IMR-90 (cell line): ENCODE measurements at regions of chr20 and their contacts with region 1.

Region 1: DNA sequence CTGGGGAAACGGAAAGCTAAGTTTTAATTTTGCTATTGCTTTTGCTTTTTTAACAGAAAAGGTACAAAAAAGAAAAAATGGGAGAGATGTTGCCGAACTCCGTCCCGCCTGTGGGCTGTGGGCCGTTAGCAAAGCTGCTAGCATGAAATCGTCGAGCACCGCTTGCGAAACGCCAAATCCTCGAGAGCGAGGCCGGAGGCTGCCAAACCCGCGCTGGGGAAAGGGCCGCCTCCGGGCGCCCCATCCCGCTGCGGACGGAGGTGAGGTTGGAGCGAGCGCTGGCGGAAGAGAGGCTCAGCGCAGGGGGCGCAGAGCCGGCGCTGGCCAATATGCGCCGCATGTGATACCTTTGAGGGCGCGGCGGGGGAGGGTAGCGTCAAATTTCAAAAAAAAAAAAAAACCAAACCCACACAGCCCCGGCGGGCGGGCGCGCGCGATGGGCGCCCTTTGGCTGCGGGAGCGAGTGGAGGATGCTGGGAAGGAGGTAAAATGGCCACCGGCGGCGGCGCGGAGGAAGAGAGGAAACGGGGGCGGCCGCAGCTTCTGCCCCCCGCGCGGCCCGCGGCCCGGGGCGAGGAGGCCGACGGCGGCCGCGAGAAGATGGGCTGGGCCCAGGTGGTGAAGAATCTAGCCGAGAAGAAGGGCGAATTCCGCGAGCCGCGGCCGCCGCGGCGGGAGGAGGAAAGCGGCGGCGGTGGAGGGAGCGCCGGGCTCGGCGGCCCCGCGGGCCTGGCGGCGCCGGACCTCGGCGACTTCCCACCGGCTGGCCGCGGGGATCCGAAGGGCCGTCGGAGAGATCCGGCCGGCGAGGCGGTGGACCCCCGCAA is at the start of gene ZCCHC3:
- DNase-seq: peak; percentile 93
- ATAC-seq: peak; percentile 90
- H3K4me3 ChIP-seq: peak within 1 kb of the TSS; percentile 100
- H3K27ac ChIP-seq: peak within 1 kb of the TSS; percentile 99
- H3K4me1 ChIP-seq: peaks cover 14% of the 10 kb centered on the region
- H3K27me3 ChIP-seq: no peaks in the 10 kb centered on the region
- CTCF ChIP-seq: 0 out of 2 replicates have a peak, but pooled peaks have one; percentile 30
- POLR2A ChIP-seq: peak; percentile 85
- RAD21 ChIP-seq: peak; percentile 29; the same call in 1 of the 2 replicates
- total RNA-seq, gene ZCCHC3: 10.9 and 13.9 TPM in 2 replicates

Region 2: DNA sequence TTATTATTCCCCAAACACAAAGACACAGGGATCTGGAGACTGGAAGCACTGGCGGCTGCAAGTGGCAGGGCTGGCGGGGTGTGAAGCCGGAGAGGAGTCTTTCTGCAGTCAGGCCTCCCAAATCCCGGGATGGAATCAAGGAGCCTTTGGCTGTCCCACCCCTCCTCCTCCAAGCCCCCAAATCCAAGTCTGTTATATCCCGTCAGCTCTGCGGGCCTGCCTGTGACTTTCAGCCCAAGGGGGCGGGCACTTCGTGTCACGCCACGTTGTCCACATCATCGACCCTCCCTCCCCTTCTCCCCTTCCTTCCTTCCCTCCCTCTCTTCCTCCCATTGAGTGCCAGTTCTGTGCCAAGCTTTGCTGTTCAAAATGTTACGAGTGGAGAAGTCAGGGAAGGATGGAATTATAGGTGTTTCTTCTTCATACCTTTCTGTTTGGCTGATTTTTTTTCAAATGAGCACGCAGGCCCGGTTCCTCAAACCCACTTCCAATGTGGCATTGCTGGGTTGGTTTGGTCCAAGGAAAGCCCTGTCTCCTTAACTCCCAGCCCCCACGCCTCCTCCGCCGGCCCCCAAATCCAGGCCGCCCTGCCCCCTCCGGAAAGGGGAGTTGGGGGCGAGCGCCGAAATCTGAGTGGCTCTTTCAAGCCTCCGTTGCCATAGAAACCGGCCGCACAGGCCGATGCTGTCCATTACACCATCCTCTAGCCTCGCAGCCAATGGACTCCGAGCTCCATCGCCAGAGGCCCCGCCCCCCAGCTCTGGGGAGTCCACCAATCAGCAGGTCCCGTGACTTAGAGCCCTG is 12.7 kb after region 1 on chr20:
- CTCF ChIA-PET with region 1: interaction called, 3 read pairs
- POLR2A ChIA-PET with region 1: interaction called, 5 read pairs
- dilution Hi-C with region 1: no loop called
- in situ Hi-C with region 1: no loop called
- intact Hi-C with region 1: loop called (anchors 2 kb)
- DNase-seq: peak; percentile 99
- ATAC-seq: peak; percentile 99
- H3K4me3 ChIP-seq: peak overlapping the region; percentile 41
- H3K27ac ChIP-seq: peak overlapping the region; percentile 82
- H3K4me1 ChIP-seq: peaks cover 9% of the 10 kb centered on the region
- H3K27me3 ChIP-seq: no peaks in the 10 kb centered on the region
- CTCF ChIP-seq: no peak
- POLR2A ChIP-seq: peak; percentile 31; the same call in 1 of the 2 replicates
- RAD21 ChIP-seq: no peak